Activated CD4-positive, alpha-beta memory T cell treated with anti-CD3 and anti-CD28 coated beads for 36 hours (primary cell): ENCODE measurements at regions of chr10 and their contacts with region 1.

Region 1: DNA sequence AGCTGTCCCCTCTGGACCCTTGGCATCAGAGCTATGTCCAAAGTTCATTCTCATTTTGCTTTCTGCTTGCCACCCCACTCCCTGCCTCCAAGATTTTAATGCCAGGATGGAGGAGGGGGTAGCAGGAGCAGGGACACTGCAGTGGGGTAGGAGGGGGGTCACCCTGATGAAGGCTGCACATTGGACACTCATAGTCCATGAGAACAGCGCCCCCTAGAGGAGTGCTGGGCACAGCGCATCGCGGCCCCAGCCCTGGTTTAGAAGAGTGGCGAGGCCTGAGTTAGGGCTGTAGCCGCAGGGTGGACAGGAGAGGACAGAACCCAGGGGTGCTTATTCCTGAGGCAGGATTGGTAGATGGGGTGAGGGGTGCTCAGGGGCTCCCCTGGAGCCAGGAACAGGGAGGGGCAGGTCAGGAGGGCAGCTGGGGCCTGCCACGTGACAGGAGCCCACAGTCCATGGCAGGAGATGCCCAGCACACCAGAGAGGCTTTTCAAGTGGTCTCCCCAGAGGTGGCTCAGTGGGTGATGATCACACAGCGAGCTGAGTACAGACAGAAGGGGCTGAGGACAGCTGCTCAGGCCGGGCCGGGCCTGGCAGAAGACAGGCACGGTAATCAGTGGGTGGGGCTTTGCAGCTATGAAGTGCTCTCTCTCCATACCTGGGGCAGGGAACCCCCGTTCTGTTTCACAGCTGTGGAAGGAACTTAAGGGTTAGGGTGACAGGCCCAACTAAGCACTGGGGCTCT is 71.4 kb downstream of the NEURL1 start:
- DNase-seq: peak; percentile 74
- H3K4me3 Mint-ChIP-seq: no peak overlapping the region
- H3K27ac Mint-ChIP-seq: no peak overlapping the region
- H3K4me1 Mint-ChIP-seq: no peaks in the 10 kb centered on the region
- H3K27me3 Mint-ChIP-seq: peaks cover 4% of the 10 kb centered on the region

Region 2: DNA sequence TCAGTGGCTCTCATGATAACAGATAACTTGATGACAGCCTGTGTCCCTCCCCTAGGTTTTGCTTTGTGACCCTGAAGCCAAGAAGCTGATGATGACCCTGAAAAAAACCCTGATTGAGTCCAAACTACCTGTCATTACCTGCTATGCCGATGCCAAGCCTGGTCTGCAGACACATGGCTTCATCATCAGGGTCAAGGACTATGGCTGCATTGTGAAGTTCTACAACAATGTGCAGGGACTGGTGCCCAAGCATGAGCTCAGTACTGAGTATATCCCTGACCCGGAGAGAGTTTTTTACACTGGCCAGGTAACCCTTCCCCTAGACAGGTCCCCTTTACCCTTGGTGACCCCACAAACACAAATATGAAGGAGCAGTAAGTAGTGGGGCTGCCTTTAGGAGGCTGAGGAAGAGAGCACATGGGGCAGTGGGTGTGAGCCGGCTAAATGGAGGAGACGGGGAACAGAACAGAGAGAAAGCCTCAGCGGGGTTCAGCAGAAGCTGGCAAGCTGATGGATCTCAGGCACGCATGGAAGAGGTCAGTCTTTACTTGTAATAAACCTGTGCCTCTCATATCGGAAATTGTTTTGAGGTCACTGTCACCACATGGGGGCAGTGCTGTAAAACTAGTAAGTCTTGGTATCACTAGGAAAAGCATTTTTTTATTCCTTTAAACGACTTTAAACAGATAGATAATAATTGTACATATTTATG is 148.4 kb before region 1 on chr10:
- CTCF ChIA-PET with region 1: interaction called, 3 read pairs
- POLR2A ChIA-PET with region 1: no interaction called
- intact Hi-C with region 1: loop called (anchors 2 kb)
- DNase-seq: peak; percentile 61
- H3K4me3 Mint-ChIP-seq: no peak overlapping the region
- H3K27ac Mint-ChIP-seq: no peak overlapping the region
- H3K4me1 Mint-ChIP-seq: no peaks in the 10 kb centered on the region
- H3K27me3 Mint-ChIP-seq: no peaks in the 10 kb centered on the region

Region 3: GRCh38 chr10:103542764-103543616 is 22.0 kb before region 1 on chr10:
- CTCF ChIA-PET with region 1: interaction called, 24 read pairs
- POLR2A ChIA-PET with region 1: no interaction called
- intact Hi-C with region 1: no loop called
- DNase-seq: peak; percentile 64
- H3K4me3 Mint-ChIP-seq: peak overlapping the region; percentile 51
- H3K27ac Mint-ChIP-seq: peak overlapping the region; percentile 50
- H3K4me1 Mint-ChIP-seq: peaks cover 12% of the 10 kb centered on the region
- H3K27me3 Mint-ChIP-seq: peaks cover 7% of the 10 kb centered on the region

Region 4: DNA sequence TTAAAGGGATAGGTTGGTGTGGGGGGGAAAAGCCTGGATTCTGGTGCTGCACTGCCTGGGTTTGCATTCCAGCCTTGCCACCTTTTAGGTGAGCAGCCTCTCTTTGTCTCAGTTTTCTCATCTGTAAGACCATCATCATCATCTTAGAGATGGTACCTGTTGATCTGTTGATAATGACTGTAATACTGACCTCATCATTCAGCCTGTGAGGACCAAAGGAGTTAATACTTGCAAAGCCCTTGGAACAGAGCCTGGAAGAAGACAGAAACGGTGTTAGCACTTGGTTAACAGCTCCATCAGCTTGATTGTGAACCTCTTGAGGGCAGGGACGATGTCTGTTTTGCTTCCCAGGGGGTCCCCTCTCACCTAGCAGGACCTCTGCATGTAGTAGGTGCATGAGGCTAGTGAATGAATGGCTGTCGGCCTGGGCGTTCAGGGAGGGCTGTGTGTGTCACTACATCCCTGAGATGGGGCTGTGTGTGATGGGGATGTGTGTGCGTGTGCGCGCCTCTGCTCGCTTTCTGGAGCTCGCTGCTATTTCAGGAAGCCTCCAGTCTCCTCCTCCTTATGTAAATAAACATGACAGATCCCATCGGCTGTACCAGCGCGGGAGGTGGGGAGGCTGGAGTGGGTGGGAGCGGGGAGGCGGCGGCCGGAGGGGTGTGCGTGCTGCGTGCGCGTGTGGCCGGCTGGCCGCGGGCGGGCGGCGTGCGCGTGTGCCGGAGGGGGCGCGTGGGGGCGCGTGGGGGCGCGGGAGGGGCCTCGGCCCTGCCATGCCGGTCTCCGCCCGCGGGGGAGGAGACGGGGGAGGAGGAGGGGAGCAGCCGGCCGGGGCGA is 10.2 kb before region 1 on chr10:
- CTCF ChIA-PET with region 1: interaction called, 12 read pairs
- POLR2A ChIA-PET with region 1: no interaction called
- intact Hi-C with region 1: no loop called
- DNase-seq: peak; percentile 58
- H3K4me3 Mint-ChIP-seq: peak overlapping the region; percentile 62
- H3K27ac Mint-ChIP-seq: no peak overlapping the region
- H3K4me1 Mint-ChIP-seq: peaks cover 16% of the 10 kb centered on the region
- H3K27me3 Mint-ChIP-seq: peaks cover 18% of the 10 kb centered on the region

Region 5: DNA sequence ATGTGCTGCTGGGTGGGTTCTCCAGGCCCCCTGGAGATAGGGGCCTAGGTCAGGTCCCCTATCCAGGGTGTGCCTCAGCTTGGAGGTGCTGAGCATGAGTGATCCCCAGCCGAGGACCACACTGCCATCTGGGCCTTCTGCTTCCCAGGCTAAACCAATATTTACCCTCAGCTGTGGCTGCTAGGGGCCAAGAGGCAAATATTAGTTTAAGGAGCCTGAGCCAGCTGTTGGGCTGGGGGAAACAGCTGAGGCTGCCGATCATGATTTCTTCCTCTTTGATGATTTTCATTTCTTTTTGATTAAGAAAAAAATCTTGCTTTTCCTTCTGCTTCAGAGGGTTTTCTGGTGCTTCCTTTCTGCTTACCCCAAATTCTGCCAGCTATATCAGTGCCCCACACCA is 11.9 kb after region 1 on chr10:
- CTCF ChIA-PET with region 1: interaction called, 12 read pairs
- POLR2A ChIA-PET with region 1: no interaction called
- intact Hi-C with region 1: no loop called
- DNase-seq: no peak
- H3K4me3 Mint-ChIP-seq: no peak overlapping the region
- H3K27ac Mint-ChIP-seq: no peak overlapping the region
- H3K4me1 Mint-ChIP-seq: no peaks in the 10 kb centered on the region
- H3K27me3 Mint-ChIP-seq: peaks cover 5% of the 10 kb centered on the region